ENCODE measurements at regions of chr12 and their contacts with region 1.

Region 1: DNA sequence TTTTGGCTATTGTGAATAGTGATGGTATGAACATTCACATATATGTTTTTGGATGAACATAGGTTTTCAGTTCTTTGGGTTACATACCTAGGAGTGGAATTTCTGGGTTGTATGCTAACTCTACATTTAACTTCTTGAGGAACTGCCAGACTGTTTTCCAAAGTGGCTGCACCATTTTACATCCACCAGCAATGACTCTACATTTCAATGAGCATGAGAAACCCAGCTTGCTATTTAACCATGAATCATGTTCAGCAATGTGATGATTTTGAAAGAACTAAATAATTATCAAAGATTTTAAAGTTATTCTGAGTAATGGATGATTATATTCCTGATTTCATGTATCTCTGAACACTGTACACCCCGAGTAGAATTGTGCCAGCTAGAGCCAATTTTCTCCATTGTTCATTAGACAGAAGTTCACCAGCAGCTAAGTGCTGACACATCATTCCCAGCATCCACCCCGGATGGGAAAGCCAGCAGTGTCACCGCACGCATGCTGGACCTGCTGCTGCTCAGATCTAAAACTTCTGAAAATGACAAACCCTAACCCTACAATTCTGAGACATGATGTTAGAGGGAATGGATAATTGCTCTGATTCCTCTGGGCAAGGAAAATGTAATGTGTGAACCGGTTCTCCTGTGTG is 13.3 kb upstream of the ANAPC5 start:
- DNase-seq: no peak
- ATAC-seq: no peak
- H3K4me3 ChIP-seq: no peak overlapping the region
- H3K27ac ChIP-seq: no peak overlapping the region
- H3K4me1 ChIP-seq: no peaks in the 10 kb centered on the region
- H3K27me3 ChIP-seq: no peaks in the 10 kb centered on the region
- CTCF ChIP-seq: no peak

Region 2: GRCh38 chr12:121264951-121265515 is 100.5 kb before region 1 on chr12:
- CTCF ChIA-PET with region 1: no interaction called
- POLR2A ChIA-PET with region 1: no interaction called
- in situ Hi-C with region 1: no loop called
- intact Hi-C with region 1: no loop called
- DNase-seq: no peak
- ATAC-seq: no peak
- H3K4me3 ChIP-seq: no peak overlapping the region
- H3K27ac ChIP-seq: no peak overlapping the region
- H3K4me1 ChIP-seq: no peaks in the 10 kb centered on the region
- H3K27me3 ChIP-seq: no peaks in the 10 kb centered on the region
- CTCF ChIP-seq: no peak

Region 3: DNA sequence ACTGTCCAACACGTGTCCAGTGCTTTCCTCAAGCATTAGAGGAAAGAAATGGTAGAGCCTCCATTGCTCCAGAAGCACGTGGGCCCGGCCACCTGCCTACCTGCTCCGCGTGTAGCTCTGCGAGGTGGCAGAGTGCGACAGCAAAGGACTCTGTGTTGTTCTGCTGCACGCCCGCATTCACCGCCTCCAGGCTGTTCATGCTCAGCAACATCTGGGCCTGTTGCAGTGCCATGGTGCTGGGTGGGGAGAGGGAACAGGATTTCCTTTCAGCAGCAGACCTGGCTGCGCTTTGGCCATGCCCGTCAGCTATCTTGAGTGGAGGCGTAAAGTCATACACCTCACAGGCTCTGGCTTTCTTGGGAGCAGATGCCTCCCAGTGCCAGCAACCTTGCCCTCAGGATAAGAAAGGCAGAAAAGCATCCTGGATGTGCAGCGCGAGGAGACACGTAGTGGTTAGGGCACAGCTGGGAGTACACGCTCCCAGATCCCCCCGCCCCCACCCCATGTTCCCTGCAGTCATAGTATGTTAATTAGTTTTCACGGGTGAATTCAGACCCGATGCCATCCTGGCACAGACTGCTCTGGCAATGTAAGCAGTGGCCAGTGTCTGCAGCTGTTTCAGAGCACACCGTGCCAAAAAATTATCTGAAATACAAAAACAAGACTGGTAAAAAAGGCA is 38.4 kb before region 1 on chr12:
- CTCF ChIA-PET with region 1: no interaction called
- POLR2A ChIA-PET with region 1: interaction called, 13 read pairs
- in situ Hi-C with region 1: no loop called
- intact Hi-C with region 1: no loop called
- DNase-seq: no peak
- ATAC-seq: no peak
- H3K4me3 ChIP-seq: no peak overlapping the region
- H3K27ac ChIP-seq: no peak overlapping the region
- H3K4me1 ChIP-seq: no peaks in the 10 kb centered on the region
- H3K27me3 ChIP-seq: no peaks in the 10 kb centered on the region
- CTCF ChIP-seq: no peak

Region 4: GRCh38 chr12:121345151-121345815 is 20.3 kb before region 1 on chr12:
- CTCF ChIA-PET with region 1: interaction called, 12 read pairs
- POLR2A ChIA-PET with region 1: no interaction called
- in situ Hi-C with region 1: no loop called
- intact Hi-C with region 1: no loop called
- DNase-seq: no peak
- ATAC-seq: no peak
- H3K4me3 ChIP-seq: no peak overlapping the region
- H3K27ac ChIP-seq: no peak overlapping the region
- H3K4me1 ChIP-seq: peaks cover 3% of the 10 kb centered on the region; the same call in 1 of the 2 replicates
- H3K27me3 ChIP-seq: no peaks in the 10 kb centered on the region
- CTCF ChIP-seq: no peak

Region 5: GRCh38 chr12:122001466-122002209 is 636.1 kb after region 1 on chr12:
- CTCF ChIA-PET with region 1: no interaction called
- POLR2A ChIA-PET with region 1: no interaction called
- in situ Hi-C with region 1: no loop called
- intact Hi-C with region 1: no loop called
- DNase-seq: no peak
- ATAC-seq: no peak
- H3K4me3 ChIP-seq: no peak overlapping the region
- H3K27ac ChIP-seq: no peak overlapping the region
- H3K4me1 ChIP-seq: no peaks in the 10 kb centered on the region
- H3K27me3 ChIP-seq: no peaks in the 10 kb centered on the region
- CTCF ChIP-seq: no peak

Measured in Panc1 (cell line).